ENCODE measurements at regions of chr3 and their contacts with region 1.

Region 1: DNA sequence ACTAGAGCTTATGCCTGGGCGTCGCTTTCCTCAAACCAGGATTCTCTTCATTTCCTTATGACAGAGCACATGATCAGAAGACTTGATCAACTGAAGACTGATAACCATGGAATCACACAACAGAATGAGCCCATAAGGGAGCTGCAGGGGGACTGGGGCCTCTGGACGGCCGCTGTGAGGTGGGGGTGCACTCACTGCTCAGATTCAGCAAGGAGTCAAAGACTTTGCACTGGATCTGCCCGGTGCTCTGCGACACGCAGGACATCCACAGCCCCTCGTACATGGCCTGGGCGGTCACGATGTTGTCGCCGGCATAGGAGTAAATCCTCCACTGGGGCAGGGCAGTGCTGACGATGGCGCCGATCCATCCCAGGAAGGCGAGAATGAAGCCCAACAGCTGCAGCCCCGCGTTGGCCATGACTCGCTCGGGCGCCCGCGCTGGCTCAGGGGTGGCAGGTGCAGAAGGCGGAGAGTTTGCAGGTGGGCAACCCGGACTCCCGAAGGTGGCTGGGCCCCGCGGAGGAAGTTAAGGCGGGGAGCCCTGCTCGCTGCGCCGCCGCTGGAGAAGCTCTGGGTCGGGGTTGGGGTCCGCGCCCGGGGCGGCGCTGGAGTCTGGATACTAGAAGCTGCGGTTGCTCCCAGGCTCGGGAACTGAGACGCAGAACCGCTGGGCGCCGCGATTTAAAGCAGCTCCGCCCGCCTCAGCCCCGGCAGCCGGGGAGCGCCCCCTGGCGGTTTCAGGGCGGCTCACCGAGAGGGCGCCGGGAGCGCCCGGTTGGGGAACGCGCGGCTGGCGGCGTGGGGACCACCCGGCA is at the start of gene CLDN1:
- DNase-seq: peak; percentile 82 to 87 (median 84)
- ATAC-seq: peak; percentile 93
- H3K4me3 ChIP-seq: no peak within 1 kb of the TSS
- H3K4me1 ChIP-seq: peaks cover 9% of the 10 kb centered on the region
- CTCF ChIP-seq: peak; percentile 80
- total RNA-seq, gene CLDN1: 0.57 to 4.3 (median 0.78) TPM

Region 2: GRCh38 chr3:189950258-189950657 is 371.7 kb before region 1 on chr3:
- intact Hi-C with region 1: loop called in 1 of 2 experiments (anchors 10 kb)
- DNase-seq: no peak
- ATAC-seq: no peak
- H3K4me3 ChIP-seq: no peak overlapping the region
- H3K4me1 ChIP-seq: peaks cover 4% of the 10 kb centered on the region
- CTCF ChIP-seq: no peak

Region 3: DNA sequence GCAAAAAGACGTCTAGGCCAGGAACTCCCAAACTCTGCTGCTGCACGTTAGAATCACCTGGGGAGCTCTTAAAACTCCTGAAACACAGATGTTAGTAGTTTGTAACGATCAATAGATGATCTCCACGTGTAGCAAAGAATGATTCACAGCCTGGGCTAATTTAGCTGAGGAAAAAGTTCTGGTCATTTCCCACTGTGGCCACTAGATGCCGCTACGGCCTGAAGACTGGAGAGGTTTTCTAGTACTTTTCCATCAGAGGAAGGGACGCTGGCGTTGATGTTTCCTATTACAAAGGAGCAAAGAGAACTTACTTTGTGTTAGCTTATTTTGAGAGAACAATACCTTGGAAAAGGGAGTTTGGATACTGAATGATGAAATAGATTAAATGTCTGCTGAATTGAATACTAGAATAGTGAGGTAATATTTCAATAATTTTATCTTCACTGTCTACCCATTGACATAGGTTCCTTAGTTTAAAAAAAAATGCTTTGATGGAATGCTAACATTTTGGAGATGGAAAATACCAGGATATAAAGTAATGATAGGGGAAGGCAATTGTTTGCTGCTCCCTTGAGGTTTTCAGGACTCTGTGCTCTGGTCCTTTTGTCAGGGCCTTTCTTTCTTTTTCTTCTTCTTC is 360.4 kb before region 1 on chr3:
- intact Hi-C with region 1: loop called (anchors 10 kb)
- DNase-seq: peak in 2 of 3 donors; percentile 75 to 83
- ATAC-seq: peak; percentile 94
- H3K4me3 ChIP-seq: no peak overlapping the region
- H3K4me1 ChIP-seq: no peaks in the 10 kb centered on the region
- CTCF ChIP-seq: peak; percentile 76

Region 4: GRCh38 chr3:190036631-190037030 is 285.4 kb before region 1 on chr3:
- intact Hi-C with region 1: no loop called
- DNase-seq: no peak
- ATAC-seq: no peak
- H3K4me3 ChIP-seq: no peak overlapping the region
- H3K4me1 ChIP-seq: peaks cover 6% of the 10 kb centered on the region
- CTCF ChIP-seq: no peak

Region 5: GRCh38 chr3:190076601-190077396 is 245.2 kb before region 1 on chr3:
- intact Hi-C with region 1: no loop called
- DNase-seq: no peak
- ATAC-seq: peak; percentile 19
- H3K4me3 ChIP-seq: no peak overlapping the region
- H3K4me1 ChIP-seq: peaks cover 8% of the 10 kb centered on the region
- CTCF ChIP-seq: no peak

Region 6: GRCh38 chr3:190224863-190225692 is 96.9 kb before region 1 on chr3:
- intact Hi-C with region 1: loop called (anchors 2 to 10 kb)
- DNase-seq: peak in 1 of 3 donors; percentile 30
- ATAC-seq: peak; percentile 52
- H3K4me3 ChIP-seq: no peak overlapping the region
- H3K4me1 ChIP-seq: no peaks in the 10 kb centered on the region
- CTCF ChIP-seq: no peak

Region 7: DNA sequence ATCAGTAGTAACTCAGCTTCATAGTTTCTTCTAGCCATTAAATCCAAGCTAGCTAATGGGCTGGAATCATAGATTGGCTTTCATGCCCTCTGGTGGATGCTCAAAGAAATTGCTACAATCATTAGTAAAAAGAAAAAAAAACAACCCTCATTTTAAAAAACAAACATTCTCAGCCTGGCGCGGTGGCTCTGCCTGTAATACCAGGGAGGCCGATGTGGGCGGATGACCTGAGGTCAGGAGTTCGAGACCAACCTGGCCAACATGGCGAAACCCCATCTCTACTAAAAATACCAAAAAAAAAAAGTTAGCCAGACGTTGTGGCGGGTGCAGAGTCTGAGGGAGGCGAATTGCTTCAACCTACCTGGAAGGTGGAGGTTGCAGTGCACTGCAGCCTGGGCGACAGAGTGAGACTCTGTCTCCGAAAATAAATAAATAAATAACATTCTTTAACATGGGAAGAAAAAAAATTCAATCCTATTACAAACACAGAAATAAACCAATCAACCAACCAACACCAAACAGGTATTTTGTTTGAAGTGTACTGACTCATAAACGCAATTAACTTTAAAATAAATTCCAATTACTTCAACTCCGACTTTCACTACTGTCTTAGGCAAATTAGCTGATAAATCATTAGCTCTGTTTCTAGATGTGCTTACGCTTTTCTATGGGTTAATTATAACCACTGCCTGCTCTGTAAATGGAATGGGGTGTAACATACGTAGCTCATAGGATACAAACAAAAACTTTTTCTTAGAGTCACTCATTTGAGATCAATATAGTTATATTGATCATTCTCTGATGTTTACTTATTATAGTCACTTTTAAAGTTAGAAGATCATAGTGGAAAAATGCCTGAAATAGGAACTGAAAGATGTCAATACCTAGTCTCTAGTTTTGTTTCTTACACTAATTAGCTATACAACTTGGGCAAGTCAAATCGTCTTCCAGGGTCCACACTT is 102.8 kb after region 1 on chr3:
- intact Hi-C with region 1: loop called in 1 of 2 experiments (anchors 10 kb)
- DNase-seq: peak; percentile 35 to 60 (median 59)
- ATAC-seq: peak; percentile 79
- H3K4me3 ChIP-seq: no peak overlapping the region
- H3K4me1 ChIP-seq: no peaks in the 10 kb centered on the region
- CTCF ChIP-seq: no peak

Region 8: GRCh38 chr3:190533511-190534277 is 211.7 kb after region 1 on chr3:
- intact Hi-C with region 1: no loop called
- DNase-seq: peak; percentile 28 to 58 (median 28)
- ATAC-seq: peak; percentile 40
- H3K4me3 ChIP-seq: no peak overlapping the region
- H3K4me1 ChIP-seq: no peaks in the 10 kb centered on the region
- CTCF ChIP-seq: no peak

Region 9: GRCh38 chr3:190618330-190619030 is 296.5 kb after region 1 on chr3:
- intact Hi-C with region 1: no loop called
- DNase-seq: no peak
- ATAC-seq: no peak
- H3K4me3 ChIP-seq: no peak overlapping the region
- H3K4me1 ChIP-seq: no peaks in the 10 kb centered on the region
- CTCF ChIP-seq: no peak

Measured in mucosa of descending colon (tissue), 3 donors.